Activated CD4-positive, alpha-beta T cell treated with anti-CD3 and anti-CD28 coated beads for 36 hours (primary cell): ENCODE measurements at regions of chrX and their contacts with region 1.

Region 1: GRCh38 chrX:74614093-74614909 is at the start of gene RLIM:
- DNase-seq: peak; percentile 94
- ATAC-seq: peak; percentile 94
- H3K4me3 Mint-ChIP-seq: peak within 1 kb of the TSS; percentile 97
- H3K27ac Mint-ChIP-seq: peak within 1 kb of the TSS; percentile 99
- H3K4me1 Mint-ChIP-seq: peaks cover 8% of the 10 kb centered on the region
- H3K27me3 Mint-ChIP-seq: no peaks in the 10 kb centered on the region
- total RNA-seq, gene RLIM: 36.5 to 38.2 TPM

Region 2: DNA sequence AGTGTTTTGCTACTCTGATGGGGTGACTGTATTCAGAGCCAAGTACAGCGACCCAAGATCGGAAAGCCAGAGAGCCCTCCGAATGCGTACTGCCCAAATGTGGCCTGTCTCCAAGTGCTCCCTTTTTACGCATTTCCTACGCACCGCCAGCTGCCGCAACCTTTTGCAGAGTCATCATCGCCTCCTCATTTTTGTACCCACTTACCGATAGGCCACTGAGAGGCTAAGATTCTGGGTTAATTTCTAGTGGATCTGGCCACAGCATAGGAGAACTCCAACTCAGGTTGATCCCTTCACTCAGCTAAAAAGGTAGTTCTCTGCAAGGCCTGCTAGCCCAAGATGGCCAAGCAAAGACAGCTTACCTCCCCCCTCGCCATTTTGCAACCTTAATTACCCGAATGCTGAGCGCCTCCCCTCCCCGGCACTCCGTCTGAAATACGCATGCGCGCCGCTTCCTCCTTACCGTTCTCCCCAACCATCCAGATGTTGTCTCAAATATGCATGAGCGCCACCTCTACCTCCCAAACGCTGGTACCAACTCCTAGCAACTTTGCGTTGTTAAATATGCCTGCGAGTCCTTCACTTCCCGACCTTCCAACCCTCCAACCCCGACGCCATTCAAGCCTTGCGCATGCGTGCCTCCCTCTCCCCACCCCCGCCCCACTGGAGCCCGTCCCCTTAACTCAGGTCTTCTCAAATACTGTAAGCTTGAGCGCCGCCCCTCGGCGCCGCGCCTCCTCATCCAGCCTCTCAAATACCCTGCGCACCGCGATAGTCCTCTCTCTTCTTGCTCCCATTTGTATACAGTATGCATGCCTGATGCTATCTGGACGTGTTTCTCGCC is 322.1 kb before region 1 on chrX:
- CTCF ChIA-PET with region 1: no interaction called
- POLR2A ChIA-PET with region 1: no interaction called
- intact Hi-C with region 1: loop called (anchors 1 to 5 kb)
- DNase-seq: peak; percentile 90
- ATAC-seq: peak; percentile 89
- H3K4me3 Mint-ChIP-seq: peak overlapping the region; percentile 89
- H3K27ac Mint-ChIP-seq: peak overlapping the region; percentile 98
- H3K4me1 Mint-ChIP-seq: peaks cover 17% of the 10 kb centered on the region
- H3K27me3 Mint-ChIP-seq: no peaks in the 10 kb centered on the region

Region 3: GRCh38 chrX:74536152-74536831 is 78.0 kb before region 1 on chrX:
- CTCF ChIA-PET with region 1: no interaction called
- POLR2A ChIA-PET with region 1: interaction called, 3 read pairs
- intact Hi-C with region 1: loop called in 1 of 2 experiments (anchors 5 kb)
- DNase-seq: peak; percentile 51
- ATAC-seq: peak; percentile 30
- H3K4me3 Mint-ChIP-seq: peak overlapping the region; percentile 66
- H3K27ac Mint-ChIP-seq: peak overlapping the region; percentile 74
- H3K4me1 Mint-ChIP-seq: peaks cover 36% of the 10 kb centered on the region
- H3K27me3 Mint-ChIP-seq: no peaks in the 10 kb centered on the region

Region 4: DNA sequence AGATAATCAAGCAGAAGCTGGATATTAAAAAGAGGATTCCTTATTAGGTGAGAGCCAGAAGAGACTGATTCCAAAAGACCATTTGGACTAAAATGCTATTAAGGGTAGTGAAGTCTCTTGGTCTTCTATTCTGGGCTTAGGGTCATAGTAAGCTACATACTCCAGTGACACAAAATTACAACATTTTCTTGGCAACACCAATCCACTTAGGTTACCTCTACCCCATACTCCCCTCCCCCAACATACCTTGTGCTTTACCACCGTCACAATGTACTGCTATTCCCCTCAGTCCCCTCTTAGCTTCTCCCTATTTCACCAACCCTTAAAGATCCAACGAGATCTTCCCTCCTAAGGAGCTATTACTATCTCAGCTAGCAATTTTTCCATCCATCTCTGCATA is 11.3 kb before region 1 on chrX:
- CTCF ChIA-PET with region 1: no interaction called
- POLR2A ChIA-PET with region 1: interaction called, 3 read pairs
- intact Hi-C with region 1: loop called in 1 of 2 experiments (anchors 1 kb)
- DNase-seq: no peak
- ATAC-seq: no peak
- H3K4me3 Mint-ChIP-seq: no peak overlapping the region
- H3K27ac Mint-ChIP-seq: peak overlapping the region; percentile 47
- H3K4me1 Mint-ChIP-seq: peaks cover 48% of the 10 kb centered on the region
- H3K27me3 Mint-ChIP-seq: no peaks in the 10 kb centered on the region

Region 5: GRCh38 chrX:75156021-75156945 is 542.0 kb after region 1 on chrX and contains the start of gene ABCB7:
- CTCF ChIA-PET with region 1: no interaction called
- POLR2A ChIA-PET with region 1: no interaction called
- intact Hi-C with region 1: loop called (anchors 1 to 10 kb)
- DNase-seq: peak; percentile 72
- ATAC-seq: peak; percentile 84
- H3K4me3 Mint-ChIP-seq: peak within 1 kb of the TSS; percentile 83
- H3K27ac Mint-ChIP-seq: peak within 1 kb of the TSS; percentile 98
- H3K4me1 Mint-ChIP-seq: peaks cover 48% of the 10 kb centered on the region
- H3K27me3 Mint-ChIP-seq: no peaks in the 10 kb centered on the region
- total RNA-seq, gene ABCB7: 52.6 to 54.5 TPM

Region 6: DNA sequence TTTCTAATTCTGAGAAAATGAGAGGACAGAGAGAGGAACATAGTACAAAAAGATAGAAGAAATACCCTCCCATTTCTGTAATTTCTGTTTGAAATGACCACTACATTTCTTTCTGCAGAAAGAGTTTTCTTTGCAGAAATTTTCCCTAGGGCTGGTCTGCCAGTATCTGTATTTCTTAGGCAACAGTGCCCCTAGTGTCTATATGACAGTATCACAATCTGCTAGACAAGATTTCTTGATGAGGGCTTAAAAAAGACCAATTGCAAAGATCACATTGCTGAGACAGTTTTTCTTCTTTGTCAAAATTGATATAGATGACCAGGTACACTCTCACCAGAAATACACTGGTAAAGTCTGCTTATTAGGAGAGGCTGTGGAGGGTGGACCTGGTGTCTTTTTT is 989.5 kb after region 1 on chrX:
- CTCF ChIA-PET with region 1: no interaction called
- POLR2A ChIA-PET with region 1: no interaction called
- intact Hi-C with region 1: loop called in 1 of 2 experiments (anchors 10 kb)
- DNase-seq: no peak
- ATAC-seq: no peak
- H3K4me3 Mint-ChIP-seq: no peak overlapping the region
- H3K27ac Mint-ChIP-seq: no peak overlapping the region
- H3K4me1 Mint-ChIP-seq: no peaks in the 10 kb centered on the region
- H3K27me3 Mint-ChIP-seq: no peaks in the 10 kb centered on the region